ENCODE measurements at regions of chr10 and their contacts with region 1.

Region 1: DNA sequence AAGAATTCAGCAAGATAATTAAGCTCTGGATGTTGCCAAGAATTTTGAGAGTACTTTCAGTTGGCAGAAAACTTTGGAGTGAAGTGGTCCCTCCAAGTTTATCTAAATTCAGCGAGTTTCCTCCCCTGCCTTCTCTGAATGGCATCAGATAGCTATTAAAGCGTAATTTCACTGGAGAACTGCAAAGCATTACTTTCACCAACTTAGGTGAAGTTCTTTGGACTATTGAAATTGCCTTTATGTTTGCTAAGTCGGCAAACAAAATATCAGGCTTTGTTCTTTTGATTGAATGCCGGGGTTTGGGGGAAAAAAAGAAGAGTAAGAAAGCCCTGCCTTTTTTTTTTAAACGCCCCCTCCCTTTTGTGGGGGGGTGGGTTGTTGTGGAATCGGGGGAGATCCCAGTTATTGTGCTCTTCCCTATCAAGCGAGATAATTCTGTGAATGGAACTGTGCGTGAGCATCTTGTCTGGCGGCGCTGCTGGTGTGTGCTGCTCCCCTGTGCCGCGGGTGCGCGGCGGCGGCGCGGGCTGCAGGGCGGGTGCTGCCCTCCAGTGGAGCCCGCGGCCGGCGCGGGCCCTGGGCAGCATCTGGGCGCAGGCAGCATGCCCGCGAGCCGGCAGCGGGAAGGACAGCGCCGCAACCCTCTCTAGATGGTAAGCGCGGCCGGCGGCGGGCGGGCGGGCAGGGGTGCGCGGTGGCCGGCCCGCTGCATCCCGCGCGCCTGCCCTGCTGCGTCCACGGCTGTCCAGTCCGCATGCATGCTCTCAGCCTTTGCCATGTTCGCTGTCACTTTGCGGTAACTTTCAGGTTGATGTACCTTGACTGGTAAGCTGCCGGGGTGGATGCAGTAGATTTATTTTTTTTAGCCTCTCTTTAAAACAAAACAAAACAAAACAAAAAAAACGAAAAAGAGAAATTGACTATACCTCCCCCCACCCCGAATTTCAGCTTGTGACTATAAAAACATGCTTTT is 176.5 kb downstream of the TCF7L2 start:
- DNase-seq: peak; percentile 87
- H3K4me3 ChIP-seq: peak overlapping the region in 5 of 8 donors; percentile 16 to 62 (median 32)
- H3K27ac ChIP-seq: peak overlapping the region in 3 of 8 donors; percentile 30 to 67 (median 34)
- H3K4me1 ChIP-seq: peaks cover 0 to 53% (median 25%) of the 10 kb centered on the region in 6 donors
- H3K27me3 ChIP-seq: peaks cover 0 to 27% (median 0%) of the 10 kb centered on the region in 7 donors
- CTCF ChIP-seq: peak in 7 of 11 experiments; percentile 8 to 79 (median 66)
- POLR2A ChIP-seq: no peak

Region 2: DNA sequence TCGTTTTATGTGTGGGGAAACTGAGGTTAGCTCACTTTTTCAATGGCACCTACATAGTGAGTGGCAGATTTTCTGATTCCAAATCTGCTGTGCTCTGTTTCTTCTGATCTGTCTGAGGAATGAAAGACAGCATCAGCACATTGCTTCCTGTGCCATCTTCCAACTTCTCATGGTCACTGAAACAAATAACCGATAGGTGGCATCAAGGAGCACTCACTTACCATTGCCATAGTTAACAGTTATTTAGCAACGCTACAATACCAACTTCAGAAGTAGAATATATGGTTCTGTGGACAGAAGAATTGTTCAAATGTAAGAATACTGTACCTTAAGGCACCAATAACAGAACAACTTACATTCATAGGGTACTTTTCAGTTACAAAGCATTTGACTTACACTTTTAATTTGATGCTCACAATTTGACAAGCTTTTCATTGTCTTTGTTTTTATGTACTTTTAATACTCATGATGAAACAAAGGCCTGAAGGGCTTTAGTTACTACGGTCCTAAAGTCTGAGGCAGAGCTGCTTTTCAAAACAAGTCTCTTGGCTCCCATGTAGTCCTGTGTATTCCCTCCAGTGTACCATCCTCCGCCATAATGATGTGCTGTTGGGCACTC is 405.3 kb before region 1 on chr10:
- intact Hi-C with region 1: loop called (anchors 5 kb)
- DNase-seq: no peak
- H3K4me3 ChIP-seq: no peak overlapping the region
- H3K27ac ChIP-seq: no peak overlapping the region
- H3K4me1 ChIP-seq: no peaks in the 10 kb centered on the region
- H3K27me3 ChIP-seq: no peaks in the 10 kb centered on the region
- CTCF ChIP-seq: peak in 10 of 11 experiments; percentile 29 to 71 (median 56)
- POLR2A ChIP-seq: no peak

Region 3: DNA sequence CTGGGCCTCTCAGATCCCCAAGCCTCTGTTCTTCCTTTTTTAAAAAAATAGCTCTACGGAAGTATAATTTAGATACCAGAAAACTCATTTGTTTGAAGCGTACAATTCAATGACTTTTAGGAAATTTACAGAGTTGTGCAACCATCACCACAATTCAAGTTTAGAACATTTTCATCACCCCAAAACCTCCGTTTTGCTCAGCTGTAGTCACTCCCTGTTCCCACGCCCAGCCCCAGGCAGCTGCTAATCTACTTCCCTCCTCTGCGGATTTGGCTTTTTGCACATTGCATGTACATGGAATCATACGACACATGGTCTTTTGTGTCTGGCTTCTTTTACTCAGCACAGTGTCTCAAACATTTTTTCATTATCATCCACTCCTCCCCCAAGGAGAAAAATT is 52.8 kb after region 1 on chr10:
- intact Hi-C with region 1: no loop called
- DNase-seq: no peak
- H3K4me3 ChIP-seq: no peak overlapping the region
- H3K27ac ChIP-seq: peak overlapping the region in 4 of 8 donors; percentile 35 to 63 (median 52)
- H3K4me1 ChIP-seq: peaks cover 0 to 19% (median 0%) of the 10 kb centered on the region in 6 donors
- H3K27me3 ChIP-seq: no peaks in the 10 kb centered on the region
- CTCF ChIP-seq: no peak
- POLR2A ChIP-seq: no peak

Measured in spleen (tissue), 13 donors.